Left cardiac atrium (tissue), 4 donors: ENCODE measurements at regions of chr9 and their contacts with region 1.

Region 1: GRCh38 chr9:35829084-35829763 is at the start of gene TMEM8B:
- DNase-seq: peak; percentile 99
- ATAC-seq: peak; percentile 94 to 95
- total RNA-seq, gene TMEM8B: 14.7 to 15.6 TPM

Region 2: DNA sequence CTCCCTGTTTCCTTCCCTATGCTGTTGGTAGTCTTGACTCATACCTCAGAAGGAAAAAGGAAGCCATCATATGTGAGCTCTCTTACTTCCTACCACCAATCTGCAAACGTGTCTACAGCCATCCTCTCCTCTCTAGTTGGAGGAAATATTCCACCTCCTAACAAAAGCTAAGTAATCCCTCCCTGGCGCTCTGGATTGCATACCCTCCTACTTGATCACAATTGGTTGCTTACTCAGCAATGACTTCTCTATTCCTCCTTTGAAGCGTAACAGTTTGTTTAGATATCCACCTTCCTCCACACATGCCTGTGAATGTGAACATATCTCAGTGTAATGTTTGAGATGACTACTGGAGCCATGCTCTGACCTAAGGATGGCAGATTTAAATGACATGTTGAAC is 321.2 kb before region 1 on chr9:
- intact Hi-C with region 1: no loop called
- DNase-seq: no peak
- ATAC-seq: no peak

Region 3: DNA sequence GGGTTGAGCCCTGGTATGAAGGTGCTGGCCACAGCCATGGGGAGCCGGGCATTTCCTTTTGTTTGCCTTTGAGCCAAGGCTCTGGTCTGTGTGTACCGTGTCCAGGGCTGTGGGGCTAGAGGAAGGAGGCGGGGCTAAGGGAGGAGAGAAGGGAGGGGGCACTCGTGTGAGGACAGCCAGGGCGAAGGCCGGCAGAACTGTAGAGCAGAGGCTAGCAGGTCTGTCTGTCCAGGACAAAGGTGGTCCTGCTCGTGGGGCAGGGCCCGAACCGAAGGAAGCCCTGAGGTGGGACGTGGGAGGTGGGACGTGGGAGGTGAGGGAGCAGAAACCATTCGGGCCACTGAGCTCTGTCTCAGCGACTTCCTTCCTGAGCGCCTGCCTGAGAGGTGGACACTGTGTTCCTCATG is 265.4 kb before region 1 on chr9:
- intact Hi-C with region 1: no loop called
- DNase-seq: peak; percentile 71
- ATAC-seq: peak; percentile 75 to 77

Region 4: GRCh38 chr9:35790385-35791296 is 38.6 kb before region 1 on chr9:
- intact Hi-C with region 1: loop called in 1 of 2 experiments (anchors 5 kb)
- DNase-seq: peak; percentile 76
- ATAC-seq: peak; percentile 88 to 91

Region 5: GRCh38 chr9:35814841-35815543 is 14.2 kb before region 1 on chr9 and contains the start of gene HINT2:
- intact Hi-C with region 1: loop called in 1 of 2 experiments (anchors 2 kb)
- DNase-seq: peak; percentile 96
- ATAC-seq: peak; percentile 94 to 96
- total RNA-seq, gene HINT2: 53.4 to 54.3 TPM

Region 6: DNA sequence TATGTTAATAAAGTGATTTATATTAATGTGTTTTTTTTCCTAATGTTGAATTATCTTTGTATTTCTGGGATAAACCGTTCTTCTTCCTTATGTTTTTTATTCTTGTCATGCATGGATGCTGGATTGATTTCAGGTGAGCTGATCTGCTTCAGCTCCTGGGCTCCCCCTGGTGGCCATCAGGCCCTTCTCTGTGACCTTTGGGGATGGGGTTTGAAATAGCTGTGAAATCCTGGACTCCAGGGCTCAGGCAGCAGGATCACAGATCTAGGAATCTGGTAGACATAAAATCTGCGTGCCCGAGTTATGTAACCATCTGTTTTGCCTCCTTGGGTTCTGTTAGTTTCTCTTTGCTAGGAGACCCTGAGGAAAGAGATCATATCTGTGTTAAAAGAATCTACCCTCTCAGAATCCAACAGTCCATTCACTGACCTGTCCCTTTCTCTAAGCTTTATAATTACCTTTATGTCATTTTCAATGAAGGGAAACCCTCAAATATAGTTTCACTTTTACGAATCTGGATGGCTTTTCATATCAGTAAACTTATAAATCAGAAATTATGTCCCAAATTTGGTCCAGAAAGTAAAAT is 53.1 kb after region 1 on chr9:
- intact Hi-C with region 1: loop called (anchors 2 to 5 kb)
- DNase-seq: peak; percentile 88
- ATAC-seq: peak; percentile 87 to 89